IMR-90 (cell line): ENCODE measurements at regions of chr10 and their contacts with region 1.

Region 1: GRCh38 chr10:27998254-27999004 is 450 bp downstream of the ODAD2 start:
- DNase-seq: peak; percentile 12
- ATAC-seq: peak; percentile 89
- H3K4me3 ChIP-seq: peak overlapping the region; percentile 83
- H3K27ac ChIP-seq: peak overlapping the region; percentile 67
- H3K4me1 ChIP-seq: peaks cover 1% of the 10 kb centered on the region; the same call in 1 of the 2 replicates
- H3K27me3 ChIP-seq: no peaks in the 10 kb centered on the region
- CTCF ChIP-seq: no peak
- POLR2A ChIP-seq: no peak
- RAD21 ChIP-seq: no peak

Region 2: DNA sequence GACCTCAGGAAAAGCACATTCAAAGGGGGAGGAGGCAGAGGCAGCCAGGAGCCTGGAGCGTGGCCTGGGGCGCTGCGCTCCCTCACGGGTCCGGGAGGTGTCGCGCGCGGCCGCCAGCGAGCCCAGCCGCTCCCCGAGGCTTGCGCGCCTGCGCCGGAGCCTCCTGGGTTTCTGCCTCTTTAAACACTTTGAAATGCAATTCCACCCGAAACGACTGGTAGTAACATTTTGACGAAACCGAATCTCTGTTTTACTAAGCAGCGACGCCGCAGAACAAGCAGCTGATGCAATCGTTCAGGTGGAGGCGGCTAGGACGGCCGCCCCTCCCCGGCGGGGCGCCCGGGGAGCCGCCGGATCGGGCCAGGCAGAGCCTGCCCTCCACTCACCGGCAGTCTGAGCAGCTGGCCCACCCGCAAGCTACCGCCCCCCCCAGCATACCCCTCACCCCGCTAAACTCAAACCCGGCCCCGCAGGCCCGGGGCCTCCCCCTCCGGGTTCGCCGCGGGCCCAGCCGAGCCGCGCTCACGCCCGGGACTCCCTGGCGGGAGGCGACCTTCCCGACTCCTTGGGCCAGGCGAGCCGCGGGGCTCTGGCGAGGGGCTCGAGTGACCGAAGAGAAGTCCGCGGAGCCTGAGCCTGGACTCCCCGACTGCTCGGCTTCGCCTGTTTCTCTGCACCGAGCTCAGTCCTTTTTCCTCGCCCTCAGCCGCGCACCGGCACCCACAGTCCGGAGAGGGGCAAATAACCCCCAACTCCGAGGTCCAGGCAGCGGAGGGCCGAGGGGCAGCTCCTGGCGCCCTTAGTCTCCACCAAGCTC is 256.0 kb before region 1 on chr10:
- CTCF ChIA-PET with region 1: no interaction called
- POLR2A ChIA-PET with region 1: no interaction called
- dilution Hi-C with region 1: no loop called
- in situ Hi-C with region 1: no loop called
- intact Hi-C with region 1: loop called (anchors 5 kb)
- DNase-seq: peak; percentile 85
- ATAC-seq: peak; percentile 85
- H3K4me3 ChIP-seq: peak overlapping the region; percentile 33
- H3K27ac ChIP-seq: peak overlapping the region; percentile 38
- H3K4me1 ChIP-seq: peaks cover 3% of the 10 kb centered on the region; the same call in 1 of the 2 replicates
- H3K27me3 ChIP-seq: peaks cover 46% of the 10 kb centered on the region
- CTCF ChIP-seq: peak; percentile 89
- POLR2A ChIP-seq: peak; percentile 61
- RAD21 ChIP-seq: peak; percentile 83

Region 3: GRCh38 chr10:28047061-28047460 is 48.6 kb after region 1 on chr10:
- CTCF ChIA-PET with region 1: no interaction called
- POLR2A ChIA-PET with region 1: no interaction called
- dilution Hi-C with region 1: no loop called
- in situ Hi-C with region 1: no loop called
- intact Hi-C with region 1: loop called (anchors 5 kb)
- DNase-seq: no peak
- ATAC-seq: no peak
- H3K4me3 ChIP-seq: no peak overlapping the region
- H3K27ac ChIP-seq: no peak overlapping the region
- H3K4me1 ChIP-seq: peaks cover 2% of the 10 kb centered on the region
- H3K27me3 ChIP-seq: no peaks in the 10 kb centered on the region
- CTCF ChIP-seq: no peak
- POLR2A ChIP-seq: no peak
- RAD21 ChIP-seq: no peak